Right cardiac atrium (tissue), 5 donors: ENCODE measurements at regions of chr1 and their contacts with region 1.

Region 1: DNA sequence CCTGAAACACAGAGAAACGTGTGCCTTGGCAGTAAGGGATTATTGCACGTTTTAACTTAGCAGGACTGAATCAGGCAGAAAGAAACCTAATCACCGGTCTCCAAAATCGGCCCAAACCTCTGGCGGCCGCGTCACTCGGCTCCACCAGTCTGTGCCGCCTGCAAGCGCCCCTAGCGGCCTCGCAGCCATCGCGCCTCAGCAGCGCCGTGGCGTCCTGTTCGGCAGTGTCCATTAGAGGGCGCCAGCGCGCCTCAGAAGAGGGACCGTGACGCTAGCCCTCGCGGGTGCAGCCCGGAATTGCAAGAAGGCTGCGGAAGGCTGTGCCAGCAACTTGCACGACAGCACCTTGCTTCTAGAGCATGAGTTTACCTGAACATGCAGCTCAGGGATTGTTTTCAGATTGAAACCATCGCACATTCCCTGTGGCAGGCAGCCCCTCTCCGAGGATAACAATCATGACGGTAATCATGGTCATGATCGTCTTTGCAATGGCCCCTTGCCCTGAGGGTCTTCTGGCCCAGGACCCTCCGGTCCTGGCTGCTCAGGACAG is 164.4 kb downstream of the TRIM33 start:
- DNase-seq: peak; percentile 95 to 98 (median 98)
- ATAC-seq: peak; percentile 98
- H3K4me3 ChIP-seq: peak overlapping the region; percentile 47
- H3K27ac ChIP-seq: peak overlapping the region; percentile 53
- H3K4me1 ChIP-seq: no peaks in the 10 kb centered on the region
- H3K27me3 ChIP-seq: no peaks in the 10 kb centered on the region

Region 2: GRCh38 chr1:113963281-113963906 is 383.2 kb before region 1 on chr1:
- intact Hi-C with region 1: no loop called
- DNase-seq: no peak
- ATAC-seq: no peak
- H3K4me3 ChIP-seq: no peak overlapping the region
- H3K27ac ChIP-seq: no peak overlapping the region
- H3K4me1 ChIP-seq: no peaks in the 10 kb centered on the region
- H3K27me3 ChIP-seq: no peaks in the 10 kb centered on the region

Region 3: DNA sequence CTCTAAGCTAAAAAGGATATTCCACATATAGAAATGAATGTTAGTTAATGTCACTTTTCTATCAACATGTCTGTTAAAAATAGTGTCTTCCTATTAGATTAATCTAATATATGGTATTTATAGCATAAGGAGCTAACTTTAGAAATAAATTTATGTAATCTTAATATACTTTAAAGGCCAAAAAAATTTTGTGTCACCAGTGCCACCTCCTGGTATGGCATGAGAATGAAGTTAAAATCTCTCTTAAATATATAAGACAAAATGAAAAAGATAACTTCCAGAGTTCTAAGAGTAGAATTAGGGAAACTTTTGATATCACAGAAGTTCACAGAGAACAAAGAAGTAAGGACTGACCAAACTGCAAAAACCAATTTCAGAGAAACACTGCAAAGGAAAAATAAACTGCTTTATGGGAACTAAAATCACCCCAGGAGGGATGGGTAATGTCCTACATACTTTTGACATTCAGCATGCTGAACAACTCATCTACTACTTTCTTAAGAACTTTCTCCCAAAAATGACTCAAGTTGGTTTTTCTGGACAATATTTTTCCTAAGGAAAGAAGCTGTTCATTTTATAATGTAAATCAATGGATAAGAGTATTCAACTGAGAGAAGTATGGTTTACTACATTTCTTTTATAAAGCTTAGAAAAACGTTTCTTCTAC is 81.7 kb after region 1 on chr1:
- intact Hi-C with region 1: loop called in 1 of 4 experiments (anchors 5 kb)
- DNase-seq: no peak
- ATAC-seq: no peak
- H3K4me3 ChIP-seq: no peak overlapping the region
- H3K27ac ChIP-seq: no peak overlapping the region
- H3K4me1 ChIP-seq: no peaks in the 10 kb centered on the region
- H3K27me3 ChIP-seq: no peaks in the 10 kb centered on the region

Region 4: DNA sequence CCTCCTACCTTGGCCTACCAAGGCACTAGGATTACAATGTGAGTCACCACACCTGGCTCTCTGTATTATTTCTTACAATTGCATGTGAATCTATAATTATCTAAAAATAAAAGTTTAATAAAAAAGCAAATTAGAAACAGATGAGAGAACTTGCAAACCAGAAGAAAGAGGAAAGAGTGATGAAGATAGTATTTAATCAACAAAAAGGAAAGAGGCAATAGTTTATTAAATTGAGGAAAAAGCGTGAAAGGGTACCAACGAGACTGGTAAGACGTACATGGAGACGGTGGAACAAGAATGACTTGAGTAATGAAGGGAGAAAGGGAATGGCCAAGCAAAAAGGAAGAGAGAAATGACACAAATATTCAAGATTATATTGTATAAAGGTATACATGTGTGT is 222.5 kb after region 1 on chr1:
- intact Hi-C with region 1: loop called in 1 of 4 experiments (anchors 5 kb)
- DNase-seq: no peak
- ATAC-seq: no peak
- H3K4me3 ChIP-seq: no peak overlapping the region
- H3K27ac ChIP-seq: no peak overlapping the region
- H3K4me1 ChIP-seq: no peaks in the 10 kb centered on the region
- H3K27me3 ChIP-seq: no peaks in the 10 kb centered on the region